ENCODE measurements at regions of chr19 and their contacts with region 1.

Region 1: DNA sequence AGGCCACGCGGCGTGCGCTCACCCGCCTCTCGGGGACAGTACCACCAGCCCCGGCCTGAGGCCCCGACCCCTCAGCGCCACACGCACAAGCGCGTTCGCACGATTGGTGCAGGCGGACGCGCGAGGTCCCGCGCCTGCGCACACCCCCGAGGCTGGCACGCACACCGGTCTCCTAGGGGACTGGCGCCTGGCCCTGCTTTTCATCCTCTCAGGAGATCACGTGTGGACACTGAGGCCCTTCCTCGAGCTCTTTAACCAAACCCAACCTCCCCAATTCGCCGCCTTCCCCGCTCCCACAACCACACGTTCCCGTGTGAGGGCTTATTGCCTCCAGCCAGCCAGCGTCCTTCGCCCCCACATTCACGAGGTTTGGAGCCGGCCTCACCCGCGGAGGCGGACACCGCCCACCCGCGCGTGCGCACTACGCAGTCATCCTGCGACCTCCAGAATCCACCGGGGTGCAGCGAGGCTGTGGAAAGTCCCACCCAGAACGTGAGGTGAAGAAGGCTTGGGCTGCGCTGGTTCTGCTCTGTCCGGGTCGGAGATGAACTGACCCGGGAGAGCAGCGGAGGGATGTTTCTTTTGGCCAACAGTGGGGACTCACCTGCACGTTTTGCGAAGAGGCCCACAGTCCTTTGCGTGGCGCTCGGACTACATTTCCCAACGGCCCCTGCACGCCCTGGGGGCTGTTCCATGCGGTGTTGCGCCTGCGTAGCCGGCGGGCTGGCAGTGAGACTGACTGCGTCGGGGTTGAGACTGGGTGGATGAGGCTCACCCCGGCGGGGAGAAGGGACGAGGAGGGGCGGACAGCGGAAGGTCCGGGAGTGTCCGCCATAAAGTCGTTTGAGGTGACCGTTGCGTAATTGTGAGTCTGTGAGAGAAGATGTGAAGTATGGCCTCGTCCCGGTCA is 539 bp upstream of the ZNF667 start:
- DNase-seq: peak; percentile 87 to 95 (median 92)
- H3K4me3 ChIP-seq: peak overlapping the region; percentile 47 to 98 (median 85)
- H3K27ac ChIP-seq: peak overlapping the region; percentile 66 to 98 (median 93)
- H3K27me3 ChIP-seq: no peaks in the 10 kb centered on the region
- CTCF ChIP-seq: peak in 10 of 56 donors; percentile 7 to 34 (median 21)

Region 2: DNA sequence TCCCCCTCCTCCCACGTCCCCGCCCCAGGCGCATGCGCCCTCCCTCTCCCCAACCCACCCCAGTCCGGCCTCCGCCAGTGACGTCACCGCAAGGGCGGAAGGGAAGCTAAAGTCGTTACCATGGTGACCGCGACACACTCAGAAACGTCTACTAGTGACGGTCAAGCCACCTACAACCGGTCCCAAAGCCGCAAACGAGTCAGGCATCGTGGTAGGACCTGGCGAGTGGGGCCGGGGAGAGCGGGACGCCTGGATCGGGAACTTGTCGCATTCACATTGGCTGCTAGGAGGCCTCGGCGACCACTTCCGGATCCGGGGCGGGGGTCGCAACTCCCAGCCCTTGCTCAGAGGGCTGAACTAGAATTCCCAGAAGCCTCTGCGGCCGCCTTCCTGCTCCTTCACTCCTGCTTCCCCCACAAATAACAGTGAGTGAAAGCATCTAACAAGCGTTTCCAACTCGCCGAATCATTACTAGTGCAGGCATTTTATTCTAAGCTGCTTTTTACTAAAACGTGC is 163.1 kb before region 1 on chr19 and contains the start of gene ZSCAN5A:
- intact Hi-C with region 1: loop called in 1 of 2 experiments (anchors 10 kb)
- DNase-seq: peak; percentile 96 to 98 (median 98)
- H3K4me3 ChIP-seq: peak within 1 kb of the TSS; percentile 57 to 97 (median 82)
- H3K27ac ChIP-seq: peak within 1 kb of the TSS; percentile 84 to 100 (median 98)
- H3K27me3 ChIP-seq: no peaks in the 10 kb centered on the region
- CTCF ChIP-seq: peak in 2 of 56 donors; percentile 14 to 18
- total RNA-seq, gene ZSCAN5A: 9.6 to 36.8 (median 16.9) TPM

Region 3: GRCh38 chr19:56403764-56404704 is 73.7 kb before region 1 on chr19 and contains the start of gene ZNF583:
- intact Hi-C with region 1: loop called (anchors 1 to 5 kb)
- DNase-seq: peak; percentile 90 to 95 (median 94)
- H3K4me3 ChIP-seq: peak within 1 kb of the TSS; percentile 61 to 99 (median 87)
- H3K27ac ChIP-seq: peak within 1 kb of the TSS; percentile 92 to 100 (median 99)
- H3K27me3 ChIP-seq: no peaks in the 10 kb centered on the region
- CTCF ChIP-seq: peak in 28 of 56 donors; percentile 3 to 54 (median 24)
- total RNA-seq, gene ZNF583: 10.0 to 26.2 (median 16.7) TPM

Region 4: GRCh38 chr19:56507446-56508289 is 30.0 kb after region 1 on chr19 and contains the start of gene ZNF471:
- intact Hi-C with region 1: loop called (anchors 1 to 2 kb)
- DNase-seq: peak; percentile 98 to 100 (median 99)
- H3K4me3 ChIP-seq: peak within 1 kb of the TSS; percentile 54 to 96 (median 80)
- H3K27ac ChIP-seq: peak within 1 kb of the TSS; percentile 87 to 99 (median 97)
- H3K27me3 ChIP-seq: no peaks in the 10 kb centered on the region
- CTCF ChIP-seq: peak in 14 of 56 donors; percentile 8 to 43 (median 15)
- total RNA-seq, gene ZNF471: 17.4 to 50.0 (median 29.5) TPM

Region 5: DNA sequence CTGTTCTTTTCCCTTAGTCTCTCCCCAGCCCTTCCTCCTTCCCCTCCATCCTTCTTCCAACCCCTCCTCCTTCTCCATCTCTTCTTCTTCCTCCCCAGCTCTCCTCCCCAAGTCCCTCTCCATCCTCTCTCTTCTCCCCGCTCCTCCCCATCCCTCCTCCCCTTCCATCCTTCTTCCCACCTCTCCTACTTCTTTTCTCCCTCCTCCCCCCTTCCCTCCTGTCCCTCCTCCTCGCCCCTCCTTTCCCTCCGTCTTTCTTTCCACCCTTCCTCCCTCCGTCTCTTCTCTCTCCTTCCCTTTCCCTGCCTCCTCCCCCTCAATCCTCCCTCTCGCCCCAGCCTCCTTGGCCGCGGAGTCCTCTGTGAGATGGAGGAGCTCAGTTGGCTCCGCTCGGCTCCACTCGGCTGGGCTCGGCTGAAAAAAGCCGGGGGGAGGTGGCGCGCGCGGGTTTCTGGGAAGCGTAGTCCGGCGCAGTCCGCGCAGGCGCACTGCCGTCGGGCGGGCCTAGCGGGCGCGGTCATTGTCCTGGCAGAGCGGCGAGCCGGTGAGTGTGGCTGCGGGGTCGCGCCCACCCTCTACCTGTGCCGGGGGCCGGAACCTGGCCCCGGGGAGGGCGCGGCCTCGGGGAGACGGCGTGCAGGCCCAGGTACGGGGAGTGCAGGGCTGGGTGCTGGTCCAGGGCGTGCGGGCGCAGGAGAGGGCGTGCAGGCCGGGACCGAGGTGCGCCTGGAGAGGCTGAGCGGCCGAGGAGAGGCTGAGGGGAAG is 117.3 kb after region 1 on chr19 and contains the start of gene ZNF71:
- intact Hi-C with region 1: loop called in 1 of 2 experiments (anchors 10 kb)
- DNase-seq: peak; percentile 71 to 94 (median 86)
- H3K4me3 ChIP-seq: peak within 1 kb of the TSS; percentile 51 to 99 (median 95)
- H3K27ac ChIP-seq: peak within 1 kb of the TSS in 52 of 59 donors; percentile 27 to 90 (median 71)
- H3K27me3 ChIP-seq: no peaks in the 10 kb centered on the region
- CTCF ChIP-seq: peak in 21 of 56 donors; percentile 9 to 45 (median 29)
- total RNA-seq, gene ZNF71: 10.6 to 21.2 (median 15.5) TPM

Measured in dorsolateral prefrontal cortex (tissue), 120 donors.